Activated CD4-positive, alpha-beta memory T cell treated with anti-CD3 and anti-CD28 coated beads, Interleukin-2, amount 10 ng/mL, durations not matched to agents 7 days and 5 days (primary cell): ENCODE measurements at regions of chr10 and their contacts with region 1.

Region 1: GRCh38 chr10:46268076-46268881 is 18.5 kb upstream of the ANTXRL start:
- DNase-seq: peak; percentile 78
- H3K4me3 Mint-ChIP-seq: no peak overlapping the region
- H3K27ac Mint-ChIP-seq: no peak overlapping the region
- H3K4me1 Mint-ChIP-seq: peaks cover 39% of the 10 kb centered on the region
- H3K27me3 Mint-ChIP-seq: no peaks in the 10 kb centered on the region

Region 2: DNA sequence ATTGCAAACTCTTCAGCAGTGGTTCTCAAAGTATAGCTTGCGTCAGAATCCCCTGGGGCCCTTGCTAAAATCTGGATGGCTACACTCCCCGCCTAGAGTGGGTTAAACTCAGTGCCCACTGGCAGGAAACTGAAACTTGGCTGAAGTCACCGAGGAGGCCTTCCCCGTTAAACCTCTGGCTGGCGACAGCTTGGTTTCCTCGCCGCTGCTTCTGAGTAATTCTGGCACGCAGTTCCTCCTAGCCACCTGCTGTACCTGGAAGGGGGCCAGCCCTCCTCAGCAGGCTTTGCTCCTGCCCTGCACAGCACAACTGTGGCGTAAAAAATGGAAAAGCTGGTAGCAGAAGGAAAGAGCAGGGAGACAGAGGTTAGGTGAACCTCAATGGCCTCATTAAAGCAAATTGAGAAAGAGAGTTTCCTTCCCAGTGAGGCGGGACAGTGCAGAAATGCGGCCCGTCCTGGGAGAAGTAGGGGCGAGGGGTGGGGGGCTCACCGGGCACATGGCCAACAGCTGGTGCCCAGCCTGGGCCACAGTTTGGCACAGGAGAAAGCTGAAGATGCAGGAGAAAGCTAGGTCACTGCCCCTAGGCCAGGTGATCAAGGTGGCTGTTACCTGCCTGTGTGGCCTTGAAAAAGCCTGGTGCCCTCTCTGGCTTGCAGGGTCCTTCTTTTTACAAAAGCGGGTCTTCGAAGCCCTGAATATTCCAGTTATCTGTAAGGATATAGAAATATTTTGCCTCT is 847.7 kb before region 1 on chr10:
- CTCF ChIA-PET with region 1: no interaction called
- POLR2A ChIA-PET with region 1: interaction called, 10 read pairs
- DNase-seq: peak; percentile 81
- H3K4me3 Mint-ChIP-seq: peak overlapping the region; percentile 98
- H3K27ac Mint-ChIP-seq: peak overlapping the region; percentile 100
- H3K4me1 Mint-ChIP-seq: peaks cover 89% of the 10 kb centered on the region
- H3K27me3 Mint-ChIP-seq: no peaks in the 10 kb centered on the region

Region 3: DNA sequence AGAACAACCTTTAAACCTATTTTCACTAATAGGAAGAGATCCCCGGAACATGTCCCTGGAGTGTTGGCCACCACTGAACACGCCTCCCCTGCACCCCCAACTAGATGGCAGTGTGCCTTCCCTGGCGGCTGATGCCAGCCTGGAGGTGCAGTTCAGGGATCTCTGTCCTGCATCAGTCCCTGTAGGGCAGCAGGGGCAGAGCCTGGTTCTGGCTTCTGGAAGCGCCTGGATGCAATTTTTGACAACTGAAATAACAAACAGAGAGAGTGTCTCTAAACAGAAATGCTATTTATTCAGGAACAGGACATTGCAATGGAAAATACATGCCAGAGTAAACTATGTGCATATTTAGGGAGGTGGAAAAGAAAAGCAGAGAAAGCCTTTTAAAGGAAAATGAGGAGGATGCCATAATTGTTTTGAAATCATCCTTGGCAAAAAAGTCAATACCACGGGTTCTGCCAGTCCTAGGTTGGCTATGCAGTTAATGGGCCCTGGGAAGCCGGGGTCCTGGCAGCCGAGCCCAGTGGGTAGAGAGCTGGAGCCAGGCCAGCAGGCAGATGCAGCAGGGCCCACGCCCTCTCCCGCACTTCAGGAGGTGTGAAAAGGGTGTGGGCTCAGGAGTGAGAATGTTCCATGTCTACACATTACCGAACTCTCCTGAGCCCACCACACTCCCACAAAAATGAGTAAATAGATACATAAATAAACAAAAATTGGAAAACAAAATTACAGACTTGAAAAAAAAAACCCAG is 37.0 kb after region 1 on chr10:
- CTCF ChIA-PET with region 1: no interaction called
- POLR2A ChIA-PET with region 1: no interaction called
- DNase-seq: no peak
- H3K4me3 Mint-ChIP-seq: no peak overlapping the region
- H3K27ac Mint-ChIP-seq: no peak overlapping the region
- H3K4me1 Mint-ChIP-seq: no peaks in the 10 kb centered on the region
- H3K27me3 Mint-ChIP-seq: no peaks in the 10 kb centered on the region